H1 (cell line): ENCODE measurements at regions of chr22 and their contacts with region 1.

Region 1: GRCh38 chr22:19750507-19751490 is 9.8 kb upstream of the TBX1 start:
- DNase-seq: no peak
- H3K4me3 ChIP-seq: no peak overlapping the region
- H3K27ac ChIP-seq: no peak overlapping the region
- H3K4me1 ChIP-seq: peaks cover 0 to 9% (median 7%) of the 10 kb centered on the region in 4 experiments; a peak in 3 of 7 replicates
- H3K27me3 ChIP-seq: peaks cover 26 to 39% (median 35%) of the 10 kb centered on the region in 4 experiments
- CTCF ChIP-seq: no peak
- EP300 ChIP-seq: no peak
- POLR2A ChIP-seq: no peak
- RAD21 ChIP-seq: no peak

Region 2: GRCh38 chr22:19260804-19261203 is 490.0 kb before region 1 on chr22:
- CTCF ChIA-PET with region 1: no interaction called
- POLR2A ChIA-PET with region 1: no interaction called
- DNase-seq: no peak
- H3K4me3 ChIP-seq: no peak overlapping the region
- H3K27ac ChIP-seq: no peak overlapping the region
- H3K4me1 ChIP-seq: no peaks in the 10 kb centered on the region
- H3K27me3 ChIP-seq: no peaks in the 10 kb centered on the region
- CTCF ChIP-seq: no peak
- EP300 ChIP-seq: no peak
- POLR2A ChIP-seq: no peak
- RAD21 ChIP-seq: no peak

Region 3: GRCh38 chr22:19766511-19767426 is 16.0 kb after region 1 on chr22:
- CTCF ChIA-PET with region 1: interaction called, 42 read pairs
- POLR2A ChIA-PET with region 1: interaction called, 21 read pairs
- DNase-seq: peak in 1 of 2 experiments; percentile 87
- H3K4me3 ChIP-seq: peak overlapping the region in 2 of 4 experiments; percentile 6 to 44; a peak in 3 of 8 replicates
- H3K27ac ChIP-seq: no peak overlapping the region
- H3K4me1 ChIP-seq: peaks cover 0 to 45% (median 32%) of the 10 kb centered on the region in 4 experiments; a peak in 6 of 7 replicates
- H3K27me3 ChIP-seq: peaks cover 79 to 95% (median 93%) of the 10 kb centered on the region in 4 experiments
- CTCF ChIP-seq: peak; percentile 29 to 52 (median 39)
- EP300 ChIP-seq: no peak
- POLR2A ChIP-seq: no peak
- RAD21 ChIP-seq: peak; percentile 46 to 49

Region 4: DNA sequence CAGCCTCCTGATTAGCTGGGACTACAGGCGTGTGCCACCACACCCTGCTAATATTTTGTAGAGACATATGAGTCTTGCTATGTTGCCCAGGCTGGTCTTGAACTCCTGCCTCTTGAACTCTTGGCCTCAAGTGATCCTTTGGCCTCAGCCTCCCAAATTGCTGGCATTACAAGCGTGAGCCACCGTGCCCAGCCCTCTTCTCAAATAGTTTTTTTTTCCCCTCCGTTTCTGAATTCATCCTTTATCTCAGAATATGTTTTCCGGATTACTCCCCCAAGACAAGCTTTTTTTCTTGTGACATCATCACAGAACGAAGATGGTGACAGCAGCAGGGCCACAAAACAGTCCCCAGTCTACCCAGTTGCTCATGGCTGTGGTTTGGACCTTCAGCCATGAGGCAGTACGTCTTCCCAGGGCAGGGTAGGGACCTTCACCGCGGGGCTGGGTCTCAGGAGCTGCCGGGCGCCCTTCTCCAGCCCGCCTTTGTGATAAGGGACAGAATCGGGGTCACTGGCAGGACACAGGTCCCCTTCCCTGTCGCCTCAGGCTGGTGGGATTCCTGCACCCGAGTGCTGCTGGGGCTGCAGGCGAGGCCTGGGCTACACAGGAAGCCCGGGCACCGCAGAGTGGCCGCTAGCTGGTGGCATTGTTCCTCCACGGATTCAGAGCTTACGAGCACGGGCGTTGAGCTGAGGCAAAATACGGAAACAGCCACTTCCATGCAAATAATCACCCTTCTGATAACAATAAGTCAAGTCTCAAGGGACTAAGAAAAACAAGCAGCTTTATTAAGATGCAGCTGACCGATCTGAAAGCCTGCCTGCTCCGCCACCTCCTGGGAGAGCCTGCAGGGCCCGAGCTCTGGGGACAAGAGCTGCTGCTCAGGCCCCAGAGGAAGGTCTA is 21.9 kb after region 1 on chr22:
- CTCF ChIA-PET with region 1: interaction called, 12 read pairs
- POLR2A ChIA-PET with region 1: no interaction called
- DNase-seq: no peak
- H3K4me3 ChIP-seq: no peak overlapping the region
- H3K27ac ChIP-seq: no peak overlapping the region
- H3K4me1 ChIP-seq: peaks cover 0 to 5% (median 4%) of the 10 kb centered on the region in 4 experiments; a peak in 5 of 7 replicates
- H3K27me3 ChIP-seq: peaks cover 20 to 36% (median 34%) of the 10 kb centered on the region in 4 experiments
- CTCF ChIP-seq: no peak
- EP300 ChIP-seq: no peak
- POLR2A ChIP-seq: no peak
- RAD21 ChIP-seq: no peak